ENCODE measurements at regions of chr6 and their contacts with region 1.

Region 1: GRCh38 chr6:75208298-75209183 is 2.7 kb upstream of the COL12A1 start:
- DNase-seq: peak in 1 of 2 experiments; percentile 96
- H3K4me3 ChIP-seq: peak overlapping the region; percentile 55 to 77 (median 66); a peak in 7 of 8 replicates
- H3K27ac ChIP-seq: no peak overlapping the region
- H3K4me1 ChIP-seq: peaks cover 5 to 26% (median 12%) of the 10 kb centered on the region in 4 experiments; a peak in 6 of 7 replicates
- H3K27me3 ChIP-seq: peaks cover 34 to 54% (median 51%) of the 10 kb centered on the region in 4 experiments
- CTCF ChIP-seq: peak; percentile 71 to 92 (median 91)
- EP300 ChIP-seq: no peak
- POLR2A ChIP-seq: no peak
- RAD21 ChIP-seq: peak; percentile 97 to 99

Region 2: GRCh38 chr6:73739096-73739495 is 1469.4 kb before region 1 on chr6:
- CTCF ChIA-PET with region 1: interaction called, 104 read pairs
- POLR2A ChIA-PET with region 1: no interaction called
- DNase-seq: no peak
- H3K4me3 ChIP-seq: no peak overlapping the region
- H3K27ac ChIP-seq: no peak overlapping the region
- H3K4me1 ChIP-seq: no peaks in the 10 kb centered on the region
- H3K27me3 ChIP-seq: no peaks in the 10 kb centered on the region
- CTCF ChIP-seq: peak in 2 of 3 experiments; percentile 56 to 62; a peak in 2 of 4 replicates
- EP300 ChIP-seq: no peak
- POLR2A ChIP-seq: no peak
- RAD21 ChIP-seq: peak; percentile 90 to 92

Region 3: DNA sequence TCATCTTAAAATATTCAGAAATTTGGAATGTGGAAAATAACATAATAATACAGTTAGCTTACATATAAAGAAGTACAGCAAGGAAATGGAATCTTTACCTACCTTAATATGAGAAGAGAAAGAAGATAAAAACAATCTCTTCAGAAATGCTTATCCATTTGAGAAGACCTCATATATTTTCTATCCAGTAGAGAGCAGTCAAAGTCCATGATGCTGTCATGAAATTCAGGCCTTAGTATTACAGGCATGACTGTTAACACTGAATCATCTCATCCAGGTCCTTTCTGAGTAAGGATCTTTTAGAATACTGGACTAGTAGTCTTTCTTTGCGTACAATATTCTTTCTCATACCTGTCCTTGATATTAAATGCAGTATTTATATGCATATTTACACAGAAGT is 799.1 kb before region 1 on chr6:
- CTCF ChIA-PET with region 1: interaction called, 17 read pairs
- POLR2A ChIA-PET with region 1: no interaction called
- DNase-seq: no peak
- H3K4me3 ChIP-seq: no peak overlapping the region
- H3K27ac ChIP-seq: no peak overlapping the region
- H3K4me1 ChIP-seq: no peaks in the 10 kb centered on the region
- H3K27me3 ChIP-seq: no peaks in the 10 kb centered on the region
- CTCF ChIP-seq: peak in 1 of 3 experiments; percentile 26; a peak in 2 of 4 replicates
- EP300 ChIP-seq: no peak
- POLR2A ChIP-seq: no peak
- RAD21 ChIP-seq: peak; percentile 73 to 75

Region 4: DNA sequence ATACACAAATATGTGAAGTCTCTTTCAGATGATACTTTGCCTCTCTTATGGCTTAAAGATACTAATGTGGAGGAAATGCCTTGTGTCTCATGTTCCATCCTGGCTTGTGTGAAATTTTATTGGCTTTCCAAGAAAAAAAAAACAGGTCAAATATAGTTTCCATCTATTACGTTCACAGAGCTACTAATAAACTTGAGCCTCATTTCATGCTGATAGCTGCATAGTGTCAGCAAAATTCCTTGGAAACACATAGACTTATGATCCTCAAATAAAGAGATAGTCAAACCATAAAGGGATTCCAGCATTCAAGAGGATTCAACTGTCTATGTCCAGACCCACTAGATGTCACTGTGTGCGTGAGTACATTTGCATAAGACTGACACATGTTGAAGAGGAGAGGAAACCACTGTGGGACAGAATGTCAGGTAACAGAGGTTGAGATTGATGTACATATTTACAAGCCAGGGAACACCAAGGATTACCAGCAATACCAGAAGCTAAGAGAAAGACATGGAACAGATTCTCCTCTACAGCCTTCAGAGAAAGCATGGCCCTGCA is 269.3 kb before region 1 on chr6:
- CTCF ChIA-PET with region 1: interaction called, 10 read pairs
- POLR2A ChIA-PET with region 1: no interaction called
- DNase-seq: no peak
- H3K4me3 ChIP-seq: no peak overlapping the region
- H3K27ac ChIP-seq: no peak overlapping the region
- H3K4me1 ChIP-seq: no peaks in the 10 kb centered on the region
- H3K27me3 ChIP-seq: no peaks in the 10 kb centered on the region
- CTCF ChIP-seq: no peak
- EP300 ChIP-seq: no peak
- POLR2A ChIP-seq: no peak
- RAD21 ChIP-seq: no peak

Region 5: DNA sequence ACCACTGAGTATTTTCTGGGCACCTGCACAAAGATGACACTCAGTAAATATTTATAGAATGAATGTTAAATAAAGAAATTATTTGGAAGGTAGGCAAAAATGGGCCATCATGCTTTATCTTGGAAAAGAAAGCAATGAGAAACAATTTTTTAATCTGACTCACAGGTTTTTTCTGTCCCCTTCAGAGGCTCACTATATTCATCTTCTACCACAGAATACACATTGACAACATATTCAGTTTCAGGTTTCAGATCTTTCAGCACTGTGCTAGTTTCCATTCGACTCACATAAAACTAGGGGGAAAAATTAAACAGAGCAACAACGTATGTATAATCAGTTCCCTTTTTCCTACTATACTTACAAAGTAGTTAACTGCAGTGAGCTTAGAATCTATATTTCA is 61.0 kb before region 1 on chr6:
- CTCF ChIA-PET with region 1: interaction called, 25 read pairs
- POLR2A ChIA-PET with region 1: no interaction called
- DNase-seq: no peak
- H3K4me3 ChIP-seq: no peak overlapping the region
- H3K27ac ChIP-seq: no peak overlapping the region
- H3K4me1 ChIP-seq: no peaks in the 10 kb centered on the region
- H3K27me3 ChIP-seq: no peaks in the 10 kb centered on the region; a peak in 1 of 7 replicates
- CTCF ChIP-seq: no peak
- EP300 ChIP-seq: no peak
- POLR2A ChIP-seq: no peak
- RAD21 ChIP-seq: no peak

Region 6: GRCh38 chr6:75249837-75250236 is 41.3 kb after region 1 on chr6:
- CTCF ChIA-PET with region 1: no interaction called
- POLR2A ChIA-PET with region 1: no interaction called
- DNase-seq: no peak
- H3K4me3 ChIP-seq: peak overlapping the region in 1 of 4 experiments; percentile 33; a peak in 1 of 8 replicates
- H3K27ac ChIP-seq: no peak overlapping the region
- H3K4me1 ChIP-seq: peaks cover 0 to 14% (median 5%) of the 10 kb centered on the region in 4 experiments; a peak in 3 of 7 replicates
- H3K27me3 ChIP-seq: no peaks in the 10 kb centered on the region
- CTCF ChIP-seq: no peak
- EP300 ChIP-seq: no peak
- POLR2A ChIP-seq: no peak
- RAD21 ChIP-seq: no peak

Region 7: GRCh38 chr6:75402296-75402695 is 193.8 kb after region 1 on chr6:
- CTCF ChIA-PET with region 1: no interaction called
- POLR2A ChIA-PET with region 1: no interaction called
- DNase-seq: no peak
- H3K4me3 ChIP-seq: no peak overlapping the region
- H3K27ac ChIP-seq: no peak overlapping the region
- H3K4me1 ChIP-seq: no peaks in the 10 kb centered on the region
- H3K27me3 ChIP-seq: no peaks in the 10 kb centered on the region; a peak in 1 of 7 replicates
- CTCF ChIP-seq: no peak
- EP300 ChIP-seq: no peak
- POLR2A ChIP-seq: no peak
- RAD21 ChIP-seq: no peak